ENCODE measurements at regions of chr1 and their contacts with region 1.

Region 1: GRCh38 chr1:244821134-244821533 is 14.3 kb upstream of the COX20 start:
- DNase-seq: peak; percentile 70
- ATAC-seq: peak; percentile 84
- H3K4me3 ChIP-seq: no peak overlapping the region
- H3K27ac ChIP-seq: no peak overlapping the region
- H3K4me1 ChIP-seq: peaks cover 23% of the 10 kb centered on the region
- H3K27me3 ChIP-seq: no peaks in the 10 kb centered on the region
- CTCF ChIP-seq: no peak

Region 2: DNA sequence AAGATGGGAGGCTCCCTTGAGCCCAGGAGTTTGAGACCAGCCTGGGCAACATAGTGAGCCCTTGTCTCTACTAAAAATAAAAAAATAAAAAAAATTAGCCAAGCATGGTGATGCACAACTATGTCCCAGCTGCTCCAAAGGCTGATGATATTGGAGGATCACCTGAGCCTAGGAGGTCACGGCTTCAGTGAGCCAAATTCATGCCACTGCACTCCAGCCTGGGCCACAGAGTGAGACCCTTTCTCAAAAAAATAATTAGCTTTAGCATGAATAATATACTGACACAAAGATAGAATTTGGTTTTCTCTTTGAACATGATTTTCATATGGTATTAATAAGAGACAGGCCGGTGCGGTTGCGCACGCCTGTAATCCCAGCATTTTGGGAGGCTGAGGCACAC is 79.4 kb before region 1 on chr1:
- CTCF ChIA-PET with region 1: no interaction called
- POLR2A ChIA-PET with region 1: interaction called, 17 read pairs
- intact Hi-C with region 1: no loop called
- DNase-seq: no peak
- ATAC-seq: no peak
- H3K4me3 ChIP-seq: no peak overlapping the region
- H3K27ac ChIP-seq: no peak overlapping the region
- H3K4me1 ChIP-seq: peaks cover 12% of the 10 kb centered on the region
- H3K27me3 ChIP-seq: no peaks in the 10 kb centered on the region
- CTCF ChIP-seq: no peak

Region 3: DNA sequence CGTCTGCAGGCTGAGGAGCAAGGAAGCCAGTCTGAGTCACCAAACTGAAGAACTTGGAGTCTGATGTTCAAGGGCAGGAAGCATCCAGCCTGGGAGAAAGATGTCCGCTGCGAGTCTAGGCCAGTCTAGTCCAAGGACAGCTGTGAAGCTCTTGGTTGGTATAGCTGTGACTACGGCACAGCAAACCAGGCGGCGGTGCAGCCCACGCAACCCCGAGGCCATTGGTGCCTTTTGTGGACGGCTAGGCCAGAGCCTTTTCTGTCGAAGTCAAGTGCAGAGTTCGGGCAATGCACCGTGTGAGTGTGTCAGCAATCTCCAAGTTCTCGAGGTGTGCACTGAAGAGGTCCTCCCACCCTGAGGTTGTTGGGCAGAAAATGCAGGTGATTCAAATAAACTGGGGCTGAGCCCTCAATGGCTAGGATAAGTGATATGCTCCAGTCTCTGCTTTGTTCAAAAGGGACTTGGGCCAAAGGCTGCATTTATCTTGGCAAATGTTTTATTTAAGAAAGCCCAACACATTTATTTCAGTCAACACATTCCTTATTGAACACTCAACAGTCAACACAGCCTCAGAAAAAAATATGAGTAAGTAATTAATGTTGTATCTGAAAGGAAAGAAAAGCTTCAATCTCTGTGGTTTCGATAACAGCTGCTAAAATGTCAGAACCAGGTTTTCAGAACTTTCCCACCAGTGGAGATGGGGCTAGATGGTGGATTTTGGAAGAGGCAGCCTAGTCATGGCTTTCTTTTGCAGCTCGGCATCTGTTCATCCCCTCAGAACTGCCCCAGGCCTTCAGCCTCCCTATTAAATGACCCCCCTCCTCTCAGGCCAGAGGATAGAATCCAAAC is 63.8 kb before region 1 on chr1:
- CTCF ChIA-PET with region 1: no interaction called
- POLR2A ChIA-PET with region 1: no interaction called
- intact Hi-C with region 1: no loop called
- DNase-seq: peak; percentile 22
- ATAC-seq: peak; percentile 37
- H3K4me3 ChIP-seq: no peak overlapping the region
- H3K27ac ChIP-seq: no peak overlapping the region
- H3K4me1 ChIP-seq: no peaks in the 10 kb centered on the region
- H3K27me3 ChIP-seq: no peaks in the 10 kb centered on the region
- CTCF ChIP-seq: no peak

Region 4: GRCh38 chr1:244918421-244919319 is 97.5 kb after region 1 on chr1:
- CTCF ChIA-PET with region 1: no interaction called
- POLR2A ChIA-PET with region 1: no interaction called
- intact Hi-C with region 1: no loop called
- DNase-seq: peak; percentile 57
- ATAC-seq: peak; percentile 76
- H3K4me3 ChIP-seq: peak overlapping the region; percentile 73
- H3K27ac ChIP-seq: no peak overlapping the region
- H3K4me1 ChIP-seq: peaks cover 5% of the 10 kb centered on the region; the same call in 1 of the 2 replicates
- H3K27me3 ChIP-seq: no peaks in the 10 kb centered on the region
- CTCF ChIP-seq: no peak; the same call in 1 of the 2 replicates

Measured in PC-3 (cell line).